ENCODE measurements at regions of chr14 and their contacts with region 1.

Region 1: DNA sequence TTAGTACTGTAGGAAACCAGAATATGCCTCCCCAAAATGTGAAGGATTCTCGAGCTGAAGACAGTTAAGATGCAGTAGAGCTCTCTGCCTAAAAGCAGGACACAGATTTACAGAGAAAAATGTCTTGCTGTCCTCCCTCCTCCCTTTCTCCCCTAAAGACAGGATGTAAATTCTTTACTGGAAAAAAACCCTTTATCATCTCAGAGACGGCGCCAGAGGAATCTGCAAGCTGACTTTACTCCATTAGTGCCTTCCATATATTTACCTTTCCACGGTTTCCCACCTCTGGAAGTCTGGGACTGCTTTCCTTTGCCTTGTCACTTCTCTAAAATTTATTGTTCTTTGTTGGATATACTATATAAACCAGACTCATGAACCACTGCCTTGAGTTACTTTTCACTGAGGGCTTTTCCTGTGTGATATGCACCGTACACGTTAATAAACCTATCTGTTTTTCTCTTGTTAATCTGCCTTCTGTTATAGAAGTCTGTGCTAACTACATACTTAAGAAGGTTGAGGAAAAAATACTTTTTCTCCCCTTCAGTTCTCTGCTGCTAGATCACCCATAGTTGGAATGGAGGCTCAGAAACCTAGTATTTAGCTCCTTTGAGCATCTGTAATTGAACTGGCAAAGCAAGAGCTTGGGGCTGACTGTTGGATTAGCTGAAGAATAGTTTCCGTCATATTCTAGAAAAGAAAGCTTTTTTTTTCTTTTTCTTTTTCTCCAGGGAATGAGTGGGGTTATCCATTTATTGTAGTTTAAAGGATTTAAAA is 99.9 kb downstream of the RAD51B start:
- DNase-seq: no peak
- ATAC-seq: no peak
- H3K4me3 ChIP-seq: no peak overlapping the region
- H3K27ac ChIP-seq: no peak overlapping the region
- H3K4me1 ChIP-seq: peaks cover 6 to 14% (median 8%) of the 10 kb centered on the region in 3 donors
- H3K27me3 ChIP-seq: no peaks in the 10 kb centered on the region
- CTCF ChIP-seq: no peak

Region 2: DNA sequence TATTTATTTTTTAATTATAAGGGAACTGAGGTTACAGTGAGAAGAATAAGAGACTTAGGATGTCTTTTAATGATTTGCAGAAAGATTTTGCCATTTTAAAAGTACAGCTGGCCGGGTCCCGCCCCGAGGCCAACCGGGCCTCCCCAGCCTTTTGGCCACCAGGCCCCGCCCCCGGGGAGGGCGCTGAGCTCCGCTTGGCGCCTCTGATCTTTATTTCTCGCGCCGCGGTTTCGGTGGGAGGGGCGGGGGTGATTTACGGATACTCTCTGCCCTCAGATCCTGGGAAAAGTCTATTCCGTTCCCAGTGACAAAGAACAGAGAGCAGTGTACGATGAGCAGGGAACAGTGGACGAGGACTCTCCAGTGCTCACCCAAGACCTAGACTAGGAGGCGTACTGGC is 120.7 kb before region 1 on chr14:
- intact Hi-C with region 1: no loop called
- DNase-seq: no peak
- ATAC-seq: no peak
- H3K4me3 ChIP-seq: no peak overlapping the region
- H3K27ac ChIP-seq: no peak overlapping the region
- H3K4me1 ChIP-seq: no peaks in the 10 kb centered on the region
- H3K27me3 ChIP-seq: no peaks in the 10 kb centered on the region
- CTCF ChIP-seq: no peak

Region 3: DNA sequence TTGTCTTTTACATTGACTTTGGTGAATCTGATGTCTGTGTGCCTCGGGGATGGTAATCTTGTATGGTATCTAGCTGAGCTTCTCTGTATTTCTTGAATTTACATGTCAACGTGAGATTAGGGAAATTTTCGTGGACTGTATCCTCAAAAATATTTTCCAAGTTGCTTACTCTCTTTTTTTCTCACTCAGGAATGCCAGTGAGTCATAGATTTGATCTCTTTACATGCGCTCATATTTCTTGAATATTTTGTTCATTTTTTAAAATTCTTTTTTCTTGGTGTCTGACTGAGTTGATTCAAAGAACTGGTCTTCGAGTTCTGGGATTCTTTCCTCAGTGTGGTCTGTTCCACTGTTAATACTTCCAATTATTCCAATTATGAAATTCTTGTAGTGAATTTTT is 107.8 kb after region 1 on chr14:
- intact Hi-C with region 1: no loop called
- DNase-seq: no peak
- ATAC-seq: no peak
- H3K4me3 ChIP-seq: no peak overlapping the region
- H3K27ac ChIP-seq: no peak overlapping the region
- H3K4me1 ChIP-seq: no peaks in the 10 kb centered on the region
- H3K27me3 ChIP-seq: no peaks in the 10 kb centered on the region
- CTCF ChIP-seq: no peak

Region 4: GRCh38 chr14:68824517-68825347 is 905.3 kb after region 1 on chr14:
- intact Hi-C with region 1: loop called in 1 of 3 experiments (anchors 10 kb)
- DNase-seq: peak; percentile 78 to 95 (median 90)
- ATAC-seq: peak; percentile 94 to 97 (median 96)
- H3K4me3 ChIP-seq: peak overlapping the region in 2 of 4 donors; percentile 8 to 22
- H3K27ac ChIP-seq: no peak overlapping the region
- H3K4me1 ChIP-seq: peaks cover 0 to 4% (median 0%) of the 10 kb centered on the region in 3 donors
- H3K27me3 ChIP-seq: no peaks in the 10 kb centered on the region
- CTCF ChIP-seq: peak; percentile 69 to 87 (median 84)

Measured in pancreas (tissue), 10 donors.